Activated CD4-positive, alpha-beta T cell treated with anti-CD3 and anti-CD28 coated beads, Interleukin-2, amount 10 ng/mL, durations not matched to agents 24 days and 14 days (primary cell): ENCODE measurements at regions of chr12 and their contacts with region 1.

Region 1: DNA sequence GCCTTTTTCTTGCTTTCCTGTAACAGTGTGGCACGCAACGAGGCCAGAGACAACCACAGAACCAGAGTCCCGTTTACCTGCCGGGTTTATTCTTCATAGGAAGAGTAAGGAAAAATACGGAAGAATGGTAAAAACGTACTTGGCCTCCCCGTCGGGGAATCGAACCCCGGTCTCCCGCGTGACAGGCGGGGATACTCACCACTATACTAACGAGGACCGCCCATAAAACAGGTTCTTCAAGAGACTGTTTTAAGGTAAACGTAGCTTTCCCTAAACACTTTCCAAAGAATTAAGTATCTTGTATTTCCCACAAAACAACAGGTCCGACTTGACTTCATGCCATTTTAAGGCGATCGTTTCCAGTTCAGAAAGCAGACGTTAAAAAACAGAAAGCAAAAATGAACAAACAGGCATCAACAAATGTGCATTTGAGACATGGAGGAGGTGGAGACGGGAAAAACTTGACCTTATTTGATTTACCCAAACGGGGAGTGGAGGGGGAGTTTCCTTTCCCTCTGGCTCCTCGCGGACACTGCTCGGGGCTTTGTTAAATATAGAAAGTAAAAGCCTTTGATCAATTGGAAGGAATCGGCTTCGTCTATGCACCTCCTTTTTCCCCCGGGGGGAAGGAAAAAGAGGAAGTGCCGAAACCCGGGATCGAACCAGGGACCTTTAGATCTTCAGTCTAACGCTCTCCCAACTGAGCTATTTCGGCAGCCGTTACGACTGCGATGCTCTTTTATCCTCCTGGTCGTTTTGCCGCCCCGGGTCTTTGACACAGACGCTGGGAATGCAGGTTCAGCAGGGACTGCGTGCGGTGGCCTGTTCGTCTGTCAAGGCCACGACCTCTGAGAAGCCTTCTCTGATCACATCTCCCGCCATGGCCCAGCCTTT is 13.0 kb upstream of the UBC start:
- DNase-seq: peak; percentile 98
- H3K4me3 Mint-ChIP-seq: peak overlapping the region; percentile 84
- H3K27ac Mint-ChIP-seq: peak overlapping the region; percentile 97
- H3K4me1 Mint-ChIP-seq: peaks cover 29% of the 10 kb centered on the region
- H3K27me3 Mint-ChIP-seq: peaks cover 2% of the 10 kb centered on the region

Region 2: GRCh38 chr12:123436017-123436964 is 1491.2 kb before region 1 on chr12 and contains the start of gene RILPL2:
- intact Hi-C with region 1: loop called (anchors 5 kb)
- DNase-seq: peak; percentile 98
- H3K4me3 Mint-ChIP-seq: peak within 1 kb of the TSS; percentile 99
- H3K27ac Mint-ChIP-seq: peak within 1 kb of the TSS; percentile 99
- H3K4me1 Mint-ChIP-seq: peaks cover 35% of the 10 kb centered on the region
- H3K27me3 Mint-ChIP-seq: no peaks in the 10 kb centered on the region
- total RNA-seq, gene RILPL2: 17.2 TPM in 2 replicates

Region 3: GRCh38 chr12:124453419-124454351 is 473.8 kb before region 1 on chr12:
- intact Hi-C with region 1: loop called (anchors 10 kb)
- DNase-seq: peak; percentile 92
- H3K4me3 Mint-ChIP-seq: peak overlapping the region; percentile 67
- H3K27ac Mint-ChIP-seq: peak overlapping the region; percentile 75
- H3K4me1 Mint-ChIP-seq: peaks cover 37% of the 10 kb centered on the region
- H3K27me3 Mint-ChIP-seq: no peaks in the 10 kb centered on the region

Region 4: DNA sequence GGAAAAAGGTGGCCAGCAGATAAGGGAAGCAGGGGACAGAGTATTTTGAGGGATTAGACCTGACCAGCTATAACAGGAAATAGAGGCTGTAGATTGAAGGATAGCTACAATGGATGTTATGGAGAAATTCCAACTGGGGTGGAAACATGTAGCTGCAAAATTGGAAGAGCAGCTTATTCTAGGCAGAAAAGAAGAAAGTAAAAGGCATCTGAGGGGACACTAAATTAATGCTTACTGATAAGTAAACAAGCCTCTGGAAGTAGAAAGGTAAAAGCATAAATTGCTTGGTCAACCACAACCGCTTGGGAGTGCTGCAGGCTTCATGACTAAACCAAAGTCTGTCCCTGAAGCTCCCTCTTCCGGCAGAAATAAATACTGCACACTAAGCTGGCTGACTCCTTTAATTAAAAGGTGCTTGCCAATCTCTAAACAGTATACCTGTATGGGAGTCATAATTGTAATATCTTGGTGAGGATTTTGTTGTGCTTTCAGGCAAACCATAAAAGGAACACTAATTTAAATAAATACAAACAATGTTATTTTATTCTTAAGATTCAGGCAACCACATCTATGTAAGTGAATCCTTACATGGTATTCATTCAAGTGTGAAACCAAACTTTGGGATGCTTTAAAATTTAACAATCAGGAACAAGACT is 20.7 kb before region 1 on chr12:
- intact Hi-C with region 1: loop called (anchors 1 kb)
- DNase-seq: peak; percentile 98
- H3K4me3 Mint-ChIP-seq: no peak overlapping the region
- H3K27ac Mint-ChIP-seq: no peak overlapping the region
- H3K4me1 Mint-ChIP-seq: peaks cover 24% of the 10 kb centered on the region
- H3K27me3 Mint-ChIP-seq: no peaks in the 10 kb centered on the region

Region 5: GRCh38 chr12:124917135-124917840 is 10.2 kb before region 1 on chr12:
- intact Hi-C with region 1: loop called (anchors 1 kb)
- DNase-seq: peak; percentile 97
- H3K4me3 Mint-ChIP-seq: peak overlapping the region; percentile 99
- H3K27ac Mint-ChIP-seq: peak overlapping the region; percentile 100
- H3K4me1 Mint-ChIP-seq: peaks cover 75% of the 10 kb centered on the region
- H3K27me3 Mint-ChIP-seq: peaks cover 2% of the 10 kb centered on the region

Region 6: GRCh38 chr12:124940549-124941527 is 13.4 kb after region 1 on chr12:
- intact Hi-C with region 1: loop called (anchors 1 kb)
- DNase-seq: peak; percentile 95
- H3K4me3 Mint-ChIP-seq: no peak overlapping the region
- H3K27ac Mint-ChIP-seq: no peak overlapping the region
- H3K4me1 Mint-ChIP-seq: peaks cover 17% of the 10 kb centered on the region
- H3K27me3 Mint-ChIP-seq: no peaks in the 10 kb centered on the region

Region 7: DNA sequence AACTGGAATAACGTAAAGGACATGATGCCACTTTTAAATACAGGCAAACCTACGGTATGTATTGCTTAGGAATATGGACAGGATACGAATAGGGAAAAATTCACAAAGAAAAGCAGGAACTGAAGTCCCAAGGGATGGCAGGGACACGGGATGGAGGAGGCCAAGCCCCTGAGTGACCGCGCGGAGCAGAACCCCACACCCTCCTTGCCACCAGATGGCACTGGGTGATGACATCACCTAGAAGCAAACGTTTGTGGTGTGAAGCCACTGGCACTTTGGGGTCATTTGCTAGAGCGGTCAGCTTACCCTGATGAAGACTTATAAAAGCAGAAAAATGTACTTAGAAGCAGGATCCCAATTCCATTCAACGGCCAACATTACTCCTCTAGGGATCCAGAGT is 52.1 kb after region 1 on chr12:
- intact Hi-C with region 1: no loop called
- DNase-seq: no peak
- H3K4me3 Mint-ChIP-seq: no peak overlapping the region
- H3K27ac Mint-ChIP-seq: no peak overlapping the region
- H3K4me1 Mint-ChIP-seq: peaks cover 6% of the 10 kb centered on the region
- H3K27me3 Mint-ChIP-seq: no peaks in the 10 kb centered on the region

Region 8: DNA sequence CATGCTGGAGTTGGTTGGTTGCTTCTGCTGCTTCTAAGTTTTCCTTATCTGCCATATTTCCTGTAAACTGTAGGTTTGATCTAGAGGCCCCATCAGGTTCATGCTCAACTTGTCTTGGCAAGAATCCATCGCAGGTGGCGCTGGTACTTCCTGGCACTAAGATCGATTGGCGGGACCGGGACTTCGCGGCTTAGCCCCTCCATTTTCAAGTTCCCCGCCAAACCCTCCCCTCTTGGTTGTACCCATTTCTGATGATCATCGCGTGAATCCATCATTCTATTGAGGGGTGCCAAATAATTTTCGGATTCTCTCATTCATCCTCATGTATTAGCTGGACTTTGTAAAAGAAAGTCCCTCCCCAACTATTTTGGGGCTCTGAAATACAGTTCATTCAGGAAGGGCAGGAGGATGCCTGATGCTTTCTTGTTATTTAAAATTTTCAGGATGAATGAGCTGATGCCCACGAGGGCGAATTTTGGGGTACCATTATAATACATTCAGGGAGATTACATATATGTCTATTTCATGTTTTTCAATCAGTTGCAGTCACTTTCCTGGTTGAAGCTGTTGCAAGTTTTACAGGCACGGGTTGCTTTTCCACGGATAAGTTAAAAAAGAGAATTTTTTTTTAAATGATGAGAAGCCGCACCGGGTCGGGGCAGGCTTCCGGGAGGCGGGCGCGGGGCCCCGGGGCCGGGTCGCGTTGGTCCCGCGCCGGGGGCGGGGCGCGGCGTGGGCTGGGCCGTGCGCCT is 65.6 kb after region 1 on chr12:
- intact Hi-C with region 1: loop called (anchors 2 kb)
- DNase-seq: peak; percentile 95
- H3K4me3 Mint-ChIP-seq: peak overlapping the region; percentile 84
- H3K27ac Mint-ChIP-seq: peak overlapping the region; percentile 86
- H3K4me1 Mint-ChIP-seq: peaks cover 27% of the 10 kb centered on the region
- H3K27me3 Mint-ChIP-seq: no peaks in the 10 kb centered on the region